Activated B cell treated with CpG ODN at 0.5 μM for 24 hours (primary cell): ENCODE measurements at regions of chr5 and their contacts with region 1.

Region 1: DNA sequence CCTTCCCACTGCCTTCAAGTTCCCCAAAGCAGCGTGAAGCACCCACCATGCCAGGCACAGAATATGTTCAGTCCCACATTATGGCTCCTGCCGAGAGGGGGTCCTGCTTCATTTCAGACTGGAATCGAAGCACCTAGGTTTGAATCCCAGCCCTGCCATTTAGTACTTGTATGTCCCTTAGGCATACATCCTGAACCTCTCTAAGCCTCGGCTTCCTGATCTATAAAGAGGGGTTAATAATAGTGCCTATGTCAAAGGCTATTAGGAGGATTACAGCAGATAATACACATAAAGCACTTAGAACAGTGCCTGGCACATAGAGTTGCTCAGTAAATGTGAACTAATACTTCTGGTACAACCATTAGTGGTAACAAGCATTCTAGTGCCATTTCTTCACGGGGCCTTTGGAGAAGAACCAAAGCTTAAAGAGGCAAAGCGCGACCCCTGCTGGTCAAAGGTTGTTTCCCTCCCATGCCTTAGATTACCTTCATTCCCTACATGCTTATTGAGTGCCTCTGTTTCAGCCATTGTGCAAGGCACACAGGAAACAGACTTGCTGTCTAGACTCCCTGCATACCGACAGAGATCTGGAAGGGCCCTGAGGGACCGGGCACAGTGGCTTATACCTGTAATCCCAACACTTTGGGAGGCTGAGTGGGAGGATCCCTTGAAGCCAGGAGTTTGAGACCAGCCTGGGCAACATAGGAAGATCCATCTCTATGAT is 98.2 kb downstream of the PPARGC1B start:
- DNase-seq: peak; percentile 70
- ATAC-seq: peak; percentile 47
- H3K4me3 Mint-ChIP-seq: no peak overlapping the region
- H3K27ac Mint-ChIP-seq: no peak overlapping the region
- H3K4me1 Mint-ChIP-seq: peaks cover 9% of the 10 kb centered on the region
- H3K27me3 Mint-ChIP-seq: no peaks in the 10 kb centered on the region
- CTCF ChIP-seq: no peak

Region 2: DNA sequence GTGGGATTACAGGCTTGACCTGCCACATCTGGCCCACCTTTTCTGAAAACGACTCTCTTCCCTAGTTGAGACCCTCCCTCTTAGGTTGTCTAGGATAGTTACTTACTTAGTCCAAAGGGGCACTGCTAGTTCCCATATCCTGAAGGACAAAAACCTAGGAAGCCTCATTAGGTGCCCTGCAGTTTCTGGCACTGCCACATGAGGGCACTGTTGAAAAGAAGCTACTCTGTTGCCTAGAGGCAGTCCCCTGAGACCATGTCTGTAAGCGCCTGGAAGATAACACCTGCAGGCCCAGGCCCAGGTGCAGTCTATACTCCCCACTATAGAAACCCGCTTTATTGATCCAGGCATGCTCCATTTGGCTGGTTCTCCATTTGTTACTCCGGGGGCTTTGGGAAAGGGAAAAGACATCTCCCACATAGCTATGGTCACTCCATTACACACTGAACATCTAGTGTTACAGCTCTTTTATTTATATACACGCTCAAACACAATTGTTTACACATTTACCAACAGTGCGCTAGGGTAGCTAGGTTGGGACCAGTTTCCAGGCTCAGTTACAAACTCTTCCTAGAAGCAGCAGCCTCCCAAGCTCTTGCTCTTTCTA is 171.6 kb before region 1 on chr5:
- CTCF ChIA-PET with region 1: interaction called, 10 read pairs
- POLR2A ChIA-PET with region 1: no interaction called
- intact Hi-C with region 1: loop called (anchors 1 kb)
- DNase-seq: no peak
- ATAC-seq: peak; percentile 47
- H3K4me3 Mint-ChIP-seq: no peak overlapping the region
- H3K27ac Mint-ChIP-seq: no peak overlapping the region
- H3K4me1 Mint-ChIP-seq: no peaks in the 10 kb centered on the region
- H3K27me3 Mint-ChIP-seq: peaks cover 14% of the 10 kb centered on the region
- CTCF ChIP-seq: no peak

Region 3: GRCh38 chr5:149680810-149681221 is 147.5 kb before region 1 on chr5:
- CTCF ChIA-PET with region 1: interaction called, 3 read pairs
- POLR2A ChIA-PET with region 1: interaction called, 5 read pairs
- intact Hi-C with region 1: loop called (anchors 1 kb)
- DNase-seq: peak; percentile 46
- ATAC-seq: peak; percentile 97
- H3K4me3 Mint-ChIP-seq: peak overlapping the region; percentile 28
- H3K27ac Mint-ChIP-seq: peak overlapping the region; percentile 80
- H3K4me1 Mint-ChIP-seq: peaks cover 55% of the 10 kb centered on the region
- H3K27me3 Mint-ChIP-seq: no peaks in the 10 kb centered on the region
- CTCF ChIP-seq: no peak

Region 4: GRCh38 chr5:149775785-149776184 is 52.5 kb before region 1 on chr5:
- CTCF ChIA-PET with region 1: interaction called, 5 read pairs
- POLR2A ChIA-PET with region 1: no interaction called
- intact Hi-C with region 1: loop called (anchors 5 kb)
- DNase-seq: no peak
- ATAC-seq: peak; percentile 29
- H3K4me3 Mint-ChIP-seq: no peak overlapping the region
- H3K27ac Mint-ChIP-seq: no peak overlapping the region
- H3K4me1 Mint-ChIP-seq: peaks cover 52% of the 10 kb centered on the region
- H3K27me3 Mint-ChIP-seq: no peaks in the 10 kb centered on the region
- CTCF ChIP-seq: no peak

Region 5: DNA sequence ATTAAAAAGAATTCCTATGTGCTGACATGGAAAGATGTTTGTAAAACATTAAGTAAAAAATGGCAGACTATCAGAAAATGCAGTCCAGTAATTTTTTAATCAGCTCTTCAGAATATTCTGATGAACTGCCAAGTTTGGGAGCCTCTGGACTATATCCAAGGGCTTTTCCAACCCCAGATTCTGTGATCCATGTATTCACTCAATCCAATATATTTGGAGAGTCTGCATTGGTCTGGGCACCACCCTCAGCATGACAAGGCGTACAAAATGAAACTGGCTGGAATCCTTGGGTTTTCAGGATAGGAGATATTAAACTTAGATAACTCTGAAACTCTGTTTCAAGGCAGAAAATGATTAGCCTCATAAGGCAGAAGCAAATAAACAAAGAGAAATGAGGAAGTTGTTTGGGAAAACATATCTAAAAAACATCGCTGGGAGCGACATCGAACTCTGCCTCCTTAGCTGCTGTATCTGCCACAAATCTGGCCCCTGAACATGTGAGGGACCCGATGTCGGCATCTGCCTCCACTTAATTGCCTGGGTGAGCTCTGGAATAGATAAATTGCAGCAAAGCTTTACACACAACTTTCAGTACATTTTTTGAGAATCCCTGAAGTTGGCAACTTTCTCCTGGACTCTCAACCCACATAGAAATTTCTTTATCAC is 101.9 kb after region 1 on chr5:
- CTCF ChIA-PET with region 1: no interaction called
- POLR2A ChIA-PET with region 1: no interaction called
- intact Hi-C with region 1: no loop called
- DNase-seq: no peak
- ATAC-seq: no peak
- H3K4me3 Mint-ChIP-seq: no peak overlapping the region
- H3K27ac Mint-ChIP-seq: no peak overlapping the region
- H3K4me1 Mint-ChIP-seq: no peaks in the 10 kb centered on the region
- H3K27me3 Mint-ChIP-seq: peaks cover 14% of the 10 kb centered on the region
- CTCF ChIP-seq: no peak

Region 6: GRCh38 chr5:149990518-149991376 is 162.4 kb after region 1 on chr5:
- CTCF ChIA-PET with region 1: interaction called, 92 read pairs
- POLR2A ChIA-PET with region 1: no interaction called
- intact Hi-C with region 1: no loop called
- DNase-seq: peak; percentile 34
- ATAC-seq: peak; percentile 99
- H3K4me3 Mint-ChIP-seq: no peak overlapping the region
- H3K27ac Mint-ChIP-seq: no peak overlapping the region
- H3K4me1 Mint-ChIP-seq: no peaks in the 10 kb centered on the region
- H3K27me3 Mint-ChIP-seq: no peaks in the 10 kb centered on the region
- CTCF ChIP-seq: peak; percentile 95

Region 7: DNA sequence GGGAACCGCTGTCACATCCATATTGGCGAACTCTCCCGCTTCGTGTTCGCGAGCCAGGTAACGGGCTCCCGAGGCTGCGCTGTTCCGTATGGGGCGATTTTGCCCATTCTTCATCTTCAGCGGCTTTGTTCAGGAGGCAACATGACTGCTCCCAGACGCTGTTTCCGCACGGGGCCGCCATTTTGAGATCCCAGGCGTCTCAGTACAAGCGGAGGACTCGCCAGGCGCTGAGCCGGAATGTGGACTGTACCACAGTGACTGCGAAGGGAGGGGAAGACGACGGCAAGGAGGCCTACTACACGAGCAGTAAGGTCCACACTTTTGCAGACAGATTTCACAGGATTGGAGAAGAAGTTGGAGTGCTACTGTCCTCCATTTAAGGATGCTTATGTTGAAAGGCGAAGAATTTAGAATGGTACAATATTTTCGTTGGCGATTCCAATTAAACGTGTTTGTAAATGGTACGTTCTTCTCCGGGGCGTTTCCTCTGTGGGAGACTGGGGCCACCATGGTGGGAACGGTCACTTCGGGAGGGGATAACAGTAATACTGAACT is 1118.1 kb after region 1 on chr5:
- CTCF ChIA-PET with region 1: no interaction called
- POLR2A ChIA-PET with region 1: no interaction called
- intact Hi-C with region 1: no loop called
- DNase-seq: no peak
- ATAC-seq: no peak
- H3K4me3 Mint-ChIP-seq: no peak overlapping the region
- H3K27ac Mint-ChIP-seq: no peak overlapping the region
- H3K4me1 Mint-ChIP-seq: no peaks in the 10 kb centered on the region
- H3K27me3 Mint-ChIP-seq: peaks cover 17% of the 10 kb centered on the region
- CTCF ChIP-seq: no peak